Motor neuron (in vitro differentiated cells): ENCODE measurements at regions of chr16 and their contacts with region 1.

Region 1: DNA sequence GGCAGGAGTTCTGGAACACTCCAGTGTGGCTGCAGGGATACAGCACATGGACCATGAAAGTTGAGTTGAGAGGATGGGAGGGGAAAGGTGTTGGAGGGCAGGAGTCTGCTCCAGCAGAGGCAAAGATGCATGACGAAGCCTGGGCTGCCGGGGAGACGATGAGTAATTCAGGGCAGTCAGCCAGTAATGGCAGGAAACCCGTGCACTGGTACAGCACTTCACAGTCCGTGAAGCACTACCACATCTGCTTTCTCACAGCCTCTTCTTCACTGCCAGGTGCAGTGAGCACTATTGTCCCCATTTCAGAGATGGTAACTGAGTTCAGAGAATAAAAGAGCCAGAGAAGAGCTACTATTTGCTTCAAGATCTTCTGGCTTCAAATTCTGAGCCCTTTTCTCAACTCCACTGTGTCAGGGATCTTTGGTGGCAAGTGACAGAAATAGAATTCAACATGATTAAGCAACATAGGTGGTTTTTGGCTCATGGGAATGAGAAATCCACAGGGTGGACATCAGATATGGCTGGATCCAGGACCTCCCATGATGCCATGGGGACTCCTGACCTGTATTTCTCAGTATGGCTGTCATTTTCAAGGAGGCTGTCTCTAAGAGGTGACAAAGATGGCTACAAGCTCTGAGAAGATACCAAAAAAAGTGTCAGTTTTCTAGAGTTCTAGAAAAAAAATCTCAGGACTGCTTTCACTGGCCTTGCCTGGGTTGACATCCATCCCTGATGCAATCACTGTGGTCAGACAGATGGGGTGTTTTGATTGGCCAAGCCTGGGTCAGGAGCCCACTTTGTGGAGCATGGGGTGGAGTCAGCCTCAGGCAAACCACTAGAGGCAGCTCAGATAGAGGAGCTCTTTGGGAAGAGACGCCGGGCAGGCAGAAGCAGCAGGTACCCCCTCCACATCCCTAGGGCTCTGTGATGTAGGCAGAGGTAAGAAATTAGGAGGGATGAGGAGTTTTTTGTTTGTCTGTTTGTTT is 24.7 kb downstream of the IL21R start:
- ATAC-seq: peak in 3 of 8 experiments; percentile 58 to 98 (median 96)
- H3K4me3 ChIP-seq: no peak overlapping the region
- H3K27ac ChIP-seq: no peak overlapping the region
- H3K4me1 ChIP-seq: no peaks in the 10 kb centered on the region

Region 2: GRCh38 chr16:27549859-27550581 is 123.3 kb after region 1 on chr16 and contains the starts of genes GTF3C1 and KATNIP:
- in situ Hi-C with region 1: loop called in 1 of 9 experiments (anchors 25 kb)
- ATAC-seq: peak; percentile 77 to 98 (median 97)
- H3K4me3 ChIP-seq: peak within 1 kb of the TSS; percentile 67 to 93 (median 91)
- H3K27ac ChIP-seq: peak within 1 kb of the TSS; percentile 67 to 75
- H3K4me1 ChIP-seq: peaks cover 11 to 13% of the 10 kb centered on the region in 2 donors
- total RNA-seq, gene GTF3C1: 41.2 to 156 (median 60.5) TPM
- total RNA-seq, gene KATNIP: 8.3 to 36.7 (median 11.5) TPM

Region 3: GRCh38 chr16:28090646-28091377 is 664.1 kb after region 1 on chr16:
- in situ Hi-C with region 1: no loop called
- ATAC-seq: peak in 2 of 8 experiments; percentile 15 to 24
- H3K4me3 ChIP-seq: no peak overlapping the region
- H3K27ac ChIP-seq: no peak overlapping the region
- H3K4me1 ChIP-seq: peaks cover 0 to 10% of the 10 kb centered on the region in 2 donors